CD4-positive, alpha-beta memory T cell (primary cell): ENCODE measurements at regions of chr13 and their contacts with region 1.

Region 1: GRCh38 chr13:32443111-32443510 is 15.2 kb upstream of the N4BP2L1 start:
- DNase-seq: peak; percentile 33 to 45 (median 41)
- H3K4me3 ChIP-seq: no peak overlapping the region
- H3K4me3 Mint-ChIP-seq: no peak overlapping the region
- H3K27ac ChIP-seq: no peak overlapping the region
- H3K27ac Mint-ChIP-seq: peak overlapping the region in 4 of 7 donors; percentile 0 to 54 (median 28)
- H3K4me1 ChIP-seq: no peaks in the 10 kb centered on the region
- H3K4me1 Mint-ChIP-seq: peaks cover 1 to 4% (median 3%) of the 10 kb centered on the region in 4 donors
- H3K27me3 ChIP-seq: no peaks in the 10 kb centered on the region
- H3K27me3 Mint-ChIP-seq: no peaks in the 10 kb centered on the region

Region 2: DNA sequence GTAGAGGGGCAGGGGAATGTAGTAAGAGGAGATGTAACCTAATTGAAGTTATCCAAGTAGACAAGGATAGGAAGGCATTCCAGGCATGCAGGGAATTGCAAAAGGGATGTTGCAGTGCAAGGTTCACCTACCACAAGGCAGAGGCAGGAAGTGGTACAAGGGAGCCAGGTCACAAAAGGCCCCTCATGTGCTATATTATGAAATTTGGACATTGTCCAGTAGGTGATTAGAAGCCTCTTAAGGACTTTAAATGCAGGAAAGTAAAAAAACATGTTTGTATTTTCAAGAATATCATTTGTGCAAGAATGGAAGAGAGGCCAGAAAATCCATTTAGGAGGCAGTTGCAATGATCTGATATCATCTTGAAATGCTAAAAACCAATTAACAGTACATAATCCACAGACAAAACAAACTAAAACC is 300.1 kb before region 1 on chr13:
- CTCF ChIA-PET with region 1: no interaction called
- POLR2A ChIA-PET with region 1: no interaction called
- intact Hi-C with region 1: no loop called
- DNase-seq: no peak
- H3K4me3 ChIP-seq: no peak overlapping the region
- H3K4me3 Mint-ChIP-seq: no peak overlapping the region
- H3K27ac ChIP-seq: no peak overlapping the region
- H3K27ac Mint-ChIP-seq: no peak overlapping the region
- H3K4me1 ChIP-seq: no peaks in the 10 kb centered on the region
- H3K4me1 Mint-ChIP-seq: no peaks in the 10 kb centered on the region
- H3K27me3 ChIP-seq: peaks cover 3% of the 10 kb centered on the region
- H3K27me3 Mint-ChIP-seq: peaks cover 0 to 4% of the 10 kb centered on the region in 2 donors

Region 3: DNA sequence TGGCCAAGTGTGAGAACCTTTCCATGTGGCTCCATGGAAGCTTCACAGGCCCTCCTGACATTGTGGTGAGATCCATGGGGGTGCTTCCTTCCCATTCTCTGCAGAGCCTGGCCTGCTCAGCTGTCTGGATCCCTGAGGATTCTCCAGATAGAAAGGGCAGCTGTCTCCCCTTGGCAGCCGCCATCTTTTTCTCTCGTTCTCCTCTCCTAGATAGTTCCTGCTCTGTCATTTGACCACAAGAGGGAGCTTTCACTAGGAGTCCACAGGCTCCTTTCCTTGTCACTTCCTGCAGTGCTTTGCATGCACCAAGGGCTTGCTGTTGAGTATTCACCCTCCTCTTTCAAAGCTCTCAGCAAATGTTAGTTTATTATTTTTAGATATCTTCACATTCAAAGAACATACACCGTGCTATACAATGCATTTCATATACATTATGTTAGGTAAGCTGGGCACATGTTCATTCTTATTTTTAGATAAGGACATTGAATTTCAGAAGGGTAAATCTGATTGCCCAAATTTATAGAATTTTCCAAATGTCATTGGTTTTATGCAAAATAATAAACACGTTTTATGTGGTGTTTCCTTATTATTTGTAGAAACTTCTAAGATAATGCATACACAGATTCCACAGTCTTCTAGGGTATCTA is 278.4 kb before region 1 on chr13:
- CTCF ChIA-PET with region 1: no interaction called
- POLR2A ChIA-PET with region 1: no interaction called
- intact Hi-C with region 1: no loop called
- DNase-seq: peak; percentile 21 to 30 (median 25)
- H3K4me3 ChIP-seq: no peak overlapping the region
- H3K4me3 Mint-ChIP-seq: no peak overlapping the region
- H3K27ac ChIP-seq: no peak overlapping the region
- H3K27ac Mint-ChIP-seq: no peak overlapping the region
- H3K4me1 ChIP-seq: no peaks in the 10 kb centered on the region
- H3K4me1 Mint-ChIP-seq: peaks cover 0 to 5% (median 1%) of the 10 kb centered on the region in 4 donors
- H3K27me3 ChIP-seq: no peaks in the 10 kb centered on the region
- H3K27me3 Mint-ChIP-seq: no peaks in the 10 kb centered on the region

Region 4: DNA sequence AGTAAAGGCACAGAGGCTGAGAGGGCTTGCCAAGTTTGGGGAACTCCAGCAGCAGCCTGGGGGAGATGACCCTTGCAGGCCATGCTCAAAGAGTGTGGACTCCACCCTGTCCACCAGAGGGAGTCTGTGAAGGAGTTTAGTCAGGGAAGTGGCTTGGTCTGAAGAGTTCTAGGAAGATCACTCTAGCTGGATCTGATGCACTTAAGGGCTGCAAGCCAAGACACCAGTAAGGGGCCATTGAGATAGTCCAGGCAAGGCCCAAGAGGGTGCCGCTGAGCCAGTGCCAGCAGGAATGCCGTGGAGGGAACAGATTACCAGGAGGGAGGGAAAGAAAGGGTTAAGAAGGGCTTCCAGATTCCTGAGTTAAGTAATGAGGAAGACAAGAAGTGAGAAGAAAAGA is 196.6 kb before region 1 on chr13:
- CTCF ChIA-PET with region 1: no interaction called
- POLR2A ChIA-PET with region 1: no interaction called
- intact Hi-C with region 1: loop called (anchors 5 kb)
- DNase-seq: peak in 3 of 5 donors; percentile 1 to 9 (median 3)
- H3K4me3 ChIP-seq: no peak overlapping the region
- H3K4me3 Mint-ChIP-seq: no peak overlapping the region
- H3K27ac ChIP-seq: no peak overlapping the region
- H3K27ac Mint-ChIP-seq: peak overlapping the region in 1 of 7 donors; percentile 58
- H3K4me1 ChIP-seq: no peaks in the 10 kb centered on the region
- H3K4me1 Mint-ChIP-seq: no peaks in the 10 kb centered on the region
- H3K27me3 ChIP-seq: no peaks in the 10 kb centered on the region
- H3K27me3 Mint-ChIP-seq: no peaks in the 10 kb centered on the region

Region 5: GRCh38 chr13:32267836-32268439 is 175.2 kb before region 1 on chr13:
- CTCF ChIA-PET with region 1: interaction called, 6 read pairs
- POLR2A ChIA-PET with region 1: no interaction called
- intact Hi-C with region 1: loop called (anchors 1 kb)
- DNase-seq: peak; percentile 26 to 41 (median 40)
- H3K4me3 ChIP-seq: no peak overlapping the region
- H3K4me3 Mint-ChIP-seq: peak overlapping the region in 1 of 8 donors; percentile 55
- H3K27ac ChIP-seq: no peak overlapping the region
- H3K27ac Mint-ChIP-seq: peak overlapping the region in 1 of 7 donors; percentile 61
- H3K4me1 ChIP-seq: no peaks in the 10 kb centered on the region
- H3K4me1 Mint-ChIP-seq: peaks cover 0 to 4% (median 0%) of the 10 kb centered on the region in 4 donors
- H3K27me3 ChIP-seq: no peaks in the 10 kb centered on the region
- H3K27me3 Mint-ChIP-seq: no peaks in the 10 kb centered on the region

Region 6: DNA sequence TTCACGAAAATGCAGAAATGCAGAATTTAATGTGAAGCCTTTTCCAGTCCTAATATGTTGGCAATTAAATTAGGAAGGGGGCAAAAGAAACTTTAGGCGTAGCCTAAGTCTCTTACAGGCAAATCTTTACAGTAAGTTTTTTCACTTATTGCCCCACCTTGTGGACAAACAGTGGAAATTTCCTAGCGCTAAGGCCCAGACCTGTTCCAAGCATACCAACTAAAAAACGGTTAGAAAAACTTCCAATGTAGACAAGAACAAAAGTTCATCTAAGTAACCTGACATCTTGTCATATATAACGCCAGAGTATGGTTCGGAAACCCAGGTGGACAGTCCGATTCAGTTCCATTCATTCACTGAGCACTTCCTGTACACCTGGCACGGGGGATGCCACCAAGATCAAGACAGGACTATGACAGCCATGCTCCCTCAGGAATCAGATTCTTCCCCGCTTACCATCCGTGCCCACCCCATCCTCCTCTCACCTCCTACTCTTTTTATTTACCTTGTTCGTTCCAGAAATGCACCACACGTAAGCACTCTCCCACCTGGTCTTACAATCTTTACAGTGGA is 132.9 kb before region 1 on chr13:
- CTCF ChIA-PET with region 1: no interaction called
- POLR2A ChIA-PET with region 1: no interaction called
- intact Hi-C with region 1: loop called (anchors 1 kb)
- DNase-seq: peak; percentile 41 to 57 (median 49)
- H3K4me3 ChIP-seq: no peak overlapping the region
- H3K4me3 Mint-ChIP-seq: peak overlapping the region in 4 of 8 donors; percentile 12 to 66 (median 42)
- H3K27ac ChIP-seq: no peak overlapping the region
- H3K27ac Mint-ChIP-seq: peak overlapping the region in 1 of 7 donors; percentile 49
- H3K4me1 ChIP-seq: peaks cover 15% of the 10 kb centered on the region
- H3K4me1 Mint-ChIP-seq: peaks cover 13 to 26% (median 16%) of the 10 kb centered on the region in 4 donors
- H3K27me3 ChIP-seq: no peaks in the 10 kb centered on the region
- H3K27me3 Mint-ChIP-seq: no peaks in the 10 kb centered on the region

Region 7: GRCh38 chr13:32381539-32381938 is 61.6 kb before region 1 on chr13:
- CTCF ChIA-PET with region 1: interaction called, 10 read pairs
- POLR2A ChIA-PET with region 1: no interaction called
- intact Hi-C with region 1: loop called (anchors 1 kb)
- DNase-seq: peak; percentile 14 to 38 (median 21)
- H3K4me3 ChIP-seq: no peak overlapping the region
- H3K4me3 Mint-ChIP-seq: no peak overlapping the region
- H3K27ac ChIP-seq: no peak overlapping the region
- H3K27ac Mint-ChIP-seq: no peak overlapping the region
- H3K4me1 ChIP-seq: no peaks in the 10 kb centered on the region
- H3K4me1 Mint-ChIP-seq: no peaks in the 10 kb centered on the region
- H3K27me3 ChIP-seq: no peaks in the 10 kb centered on the region
- H3K27me3 Mint-ChIP-seq: no peaks in the 10 kb centered on the region

Region 8: DNA sequence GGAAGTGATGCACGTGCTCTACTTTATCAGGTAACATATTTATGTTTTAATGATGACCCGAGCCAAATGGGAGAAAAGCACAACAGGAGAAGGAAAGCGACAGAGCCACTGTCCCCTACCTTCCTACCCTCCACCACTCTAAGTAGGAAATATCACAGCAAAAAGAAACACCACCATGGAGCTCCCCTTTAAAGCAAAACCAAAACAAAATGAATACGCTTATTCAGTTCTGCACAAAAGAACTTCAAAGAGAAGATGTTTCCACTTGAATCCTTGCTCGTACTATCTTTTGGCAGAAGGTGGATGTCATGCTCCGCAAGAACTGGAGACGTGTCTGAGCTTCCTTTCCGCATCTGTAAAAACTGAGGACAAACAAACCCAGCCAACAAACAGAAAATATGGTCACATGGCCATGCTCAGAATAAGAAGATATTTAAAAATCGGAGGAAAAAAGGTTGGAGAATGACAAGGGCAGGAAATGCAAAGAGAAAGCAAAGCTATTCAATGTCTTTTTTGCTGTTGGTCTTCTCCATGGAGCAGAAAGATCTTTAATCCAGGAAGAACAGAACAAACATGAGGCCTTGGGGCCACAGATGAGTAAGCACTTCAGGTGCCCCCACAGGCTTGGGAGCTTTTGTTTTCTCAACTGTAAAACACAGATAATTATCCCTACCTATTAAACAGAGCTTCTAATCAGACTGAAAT is 34.7 kb before region 1 on chr13:
- CTCF ChIA-PET with region 1: no interaction called
- POLR2A ChIA-PET with region 1: no interaction called
- intact Hi-C with region 1: no loop called
- DNase-seq: peak in 1 of 5 donors; percentile 9
- H3K4me3 ChIP-seq: no peak overlapping the region
- H3K4me3 Mint-ChIP-seq: peak overlapping the region; percentile 43 to 81 (median 70)
- H3K27ac ChIP-seq: no peak overlapping the region
- H3K27ac Mint-ChIP-seq: peak overlapping the region; percentile 39 to 91 (median 69)
- H3K4me1 ChIP-seq: no peaks in the 10 kb centered on the region
- H3K4me1 Mint-ChIP-seq: peaks cover 23 to 35% (median 26%) of the 10 kb centered on the region in 4 donors
- H3K27me3 ChIP-seq: no peaks in the 10 kb centered on the region
- H3K27me3 Mint-ChIP-seq: no peaks in the 10 kb centered on the region